ENCODE measurements at regions of chr3 and their contacts with region 1.

Region 1: GRCh38 chr3:34683851-34684250 is 885.4 kb downstream of the PDCD6IP start:
- DNase-seq: peak; percentile 9
- ATAC-seq: peak; percentile 87
- H3K4me3 ChIP-seq: no peak overlapping the region
- H3K27ac ChIP-seq: no peak overlapping the region
- H3K4me1 ChIP-seq: no peaks in the 10 kb centered on the region
- H3K27me3 ChIP-seq: no peaks in the 10 kb centered on the region
- CTCF ChIP-seq: peak; percentile 51 to 68 (median 65); a peak in 5 of 6 replicates
- EP300 ChIP-seq: no peak
- POLR2A ChIP-seq: no peak
- RAD21 ChIP-seq: peak; percentile 70

Region 2: GRCh38 chr3:33915791-33916546 is 767.9 kb before region 1 on chr3:
- CTCF ChIA-PET with region 1: interaction called, 7 read pairs
- POLR2A ChIA-PET with region 1: no interaction called
- RAD21 ChIA-PET with region 1: interaction called, 19 read pairs
- SMC1A ChIA-PET with region 1: interaction called, 8 read pairs
- in situ Hi-C with region 1: no loop called
- intact Hi-C with region 1: no loop called
- DNase-seq: no peak
- ATAC-seq: peak; percentile 80
- H3K4me3 ChIP-seq: no peak overlapping the region
- H3K27ac ChIP-seq: no peak overlapping the region
- H3K4me1 ChIP-seq: no peaks in the 10 kb centered on the region
- H3K27me3 ChIP-seq: no peaks in the 10 kb centered on the region; a peak in 1 of 4 replicates
- CTCF ChIP-seq: peak in 2 of 3 experiments; percentile 16 to 48; a peak in 3 of 6 replicates
- EP300 ChIP-seq: no peak
- POLR2A ChIP-seq: no peak
- RAD21 ChIP-seq: peak; percentile 82

Region 3: DNA sequence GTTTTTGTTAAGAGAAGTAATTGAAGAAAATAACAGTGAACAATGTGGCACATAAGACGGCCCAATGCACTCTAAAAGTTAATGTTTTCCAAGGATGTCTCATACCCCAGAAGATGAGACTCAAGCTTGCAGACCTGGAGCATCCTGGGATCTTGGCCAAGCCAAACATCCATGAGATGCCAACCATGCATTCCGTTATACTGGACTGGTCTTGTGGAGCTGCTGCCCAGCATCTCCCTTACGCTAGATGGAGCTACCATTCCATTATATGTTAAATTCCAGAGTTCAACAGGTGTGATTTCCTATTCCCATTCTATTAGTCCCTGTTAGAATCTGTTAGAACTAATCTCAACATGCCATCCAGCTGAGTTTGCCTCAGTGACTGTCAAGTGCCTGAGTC is 703.6 kb before region 1 on chr3:
- CTCF ChIA-PET with region 1: interaction called, 18 read pairs
- POLR2A ChIA-PET with region 1: no interaction called
- RAD21 ChIA-PET with region 1: interaction called, 19 read pairs
- SMC1A ChIA-PET with region 1: interaction called, 4 read pairs
- in situ Hi-C with region 1: loop called (anchors 25 kb)
- intact Hi-C with region 1: loop called (anchors 1 kb)
- DNase-seq: peak; percentile 11
- ATAC-seq: peak; percentile 68
- H3K4me3 ChIP-seq: no peak overlapping the region
- H3K27ac ChIP-seq: no peak overlapping the region
- H3K4me1 ChIP-seq: no peaks in the 10 kb centered on the region
- H3K27me3 ChIP-seq: no peaks in the 10 kb centered on the region
- CTCF ChIP-seq: peak; percentile 50 to 56 (median 51); a peak in 5 of 6 replicates
- EP300 ChIP-seq: no peak
- POLR2A ChIP-seq: no peak
- RAD21 ChIP-seq: peak; percentile 67

Region 4: GRCh38 chr3:34106879-34107278 is 577.0 kb before region 1 on chr3:
- CTCF ChIA-PET with region 1: interaction called, 29 read pairs
- POLR2A ChIA-PET with region 1: no interaction called
- RAD21 ChIA-PET with region 1: interaction called, 12 read pairs
- SMC1A ChIA-PET with region 1: interaction called, 7 read pairs
- in situ Hi-C with region 1: no loop called
- intact Hi-C with region 1: loop called (anchors 5 kb)
- DNase-seq: peak; percentile 51
- ATAC-seq: peak; percentile 73
- H3K4me3 ChIP-seq: no peak overlapping the region
- H3K27ac ChIP-seq: peak overlapping the region; percentile 60
- H3K4me1 ChIP-seq: peaks cover 36% of the 10 kb centered on the region
- H3K27me3 ChIP-seq: no peaks in the 10 kb centered on the region
- CTCF ChIP-seq: peak; percentile 57 to 78 (median 69)
- EP300 ChIP-seq: no peak
- POLR2A ChIP-seq: no peak
- RAD21 ChIP-seq: peak; percentile 69

Region 5: DNA sequence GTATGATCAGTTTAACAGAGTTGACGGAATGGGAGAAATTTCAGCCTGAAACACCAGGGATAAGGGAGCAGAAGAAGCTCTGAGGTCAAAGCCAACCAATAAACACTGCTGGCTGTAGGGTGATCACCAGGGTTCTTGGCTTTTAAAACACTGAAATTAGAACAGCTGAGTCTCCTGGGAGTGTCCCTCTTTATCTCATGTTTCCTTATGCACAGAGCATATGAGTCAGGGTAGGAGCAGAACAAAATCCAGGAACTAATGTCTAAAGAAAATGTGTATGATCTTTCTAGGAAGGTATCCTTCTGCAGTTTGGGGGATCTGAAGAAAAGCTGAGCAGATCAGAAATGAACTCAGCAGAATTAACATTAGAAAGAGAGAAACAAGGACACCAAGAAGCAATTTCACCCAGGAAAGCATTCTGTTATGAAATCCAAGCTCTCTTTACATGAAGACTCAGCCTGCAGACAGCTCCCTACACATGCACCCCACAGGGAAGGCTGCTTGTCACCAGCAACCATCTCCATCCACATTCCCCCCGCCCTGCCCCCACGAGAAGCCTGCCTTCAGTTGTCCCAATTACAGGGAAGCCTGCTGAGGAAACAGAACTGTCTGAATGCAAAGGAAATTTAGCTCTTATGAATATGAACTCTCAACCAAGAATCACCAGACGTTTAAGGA is 415.7 kb before region 1 on chr3:
- CTCF ChIA-PET with region 1: interaction called, 7 read pairs
- POLR2A ChIA-PET with region 1: no interaction called
- RAD21 ChIA-PET with region 1: interaction called, 10 read pairs
- SMC1A ChIA-PET with region 1: interaction called, 4 read pairs
- in situ Hi-C with region 1: no loop called
- intact Hi-C with region 1: no loop called
- DNase-seq: no peak
- ATAC-seq: no peak
- H3K4me3 ChIP-seq: no peak overlapping the region
- H3K27ac ChIP-seq: no peak overlapping the region
- H3K4me1 ChIP-seq: no peaks in the 10 kb centered on the region
- H3K27me3 ChIP-seq: no peaks in the 10 kb centered on the region
- CTCF ChIP-seq: no peak
- EP300 ChIP-seq: no peak
- POLR2A ChIP-seq: no peak
- RAD21 ChIP-seq: no peak

Measured in GM12878 (cell line).